ENCODE measurements at regions of chr1 and their contacts with region 1.

Region 1: DNA sequence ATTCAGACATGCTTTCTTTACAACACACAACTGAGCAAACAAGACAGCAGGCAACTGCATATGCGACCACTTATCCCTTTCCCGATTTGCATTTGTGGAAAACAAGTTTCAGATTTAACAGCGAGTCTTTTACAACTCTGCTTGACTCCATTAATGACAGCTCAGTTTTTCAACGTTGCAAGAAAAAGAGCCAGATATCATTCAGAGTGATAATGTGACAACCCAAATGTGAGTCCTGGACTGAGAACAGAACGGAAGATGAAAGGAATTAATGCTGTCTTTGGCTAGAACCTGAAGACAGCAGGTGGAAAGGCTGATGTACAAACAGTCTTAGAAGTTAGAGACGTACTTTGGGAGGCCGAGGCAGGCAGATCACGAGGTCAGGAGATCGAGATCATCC is 83.0 kb upstream of the C8B start:
- DNase-seq: no peak
- ATAC-seq: no peak
- H3K4me3 ChIP-seq: no peak overlapping the region
- H3K27ac ChIP-seq: no peak overlapping the region
- H3K4me1 ChIP-seq: no peaks in the 10 kb centered on the region
- H3K27me3 ChIP-seq: no peaks in the 10 kb centered on the region
- CTCF ChIP-seq: no peak

Region 2: DNA sequence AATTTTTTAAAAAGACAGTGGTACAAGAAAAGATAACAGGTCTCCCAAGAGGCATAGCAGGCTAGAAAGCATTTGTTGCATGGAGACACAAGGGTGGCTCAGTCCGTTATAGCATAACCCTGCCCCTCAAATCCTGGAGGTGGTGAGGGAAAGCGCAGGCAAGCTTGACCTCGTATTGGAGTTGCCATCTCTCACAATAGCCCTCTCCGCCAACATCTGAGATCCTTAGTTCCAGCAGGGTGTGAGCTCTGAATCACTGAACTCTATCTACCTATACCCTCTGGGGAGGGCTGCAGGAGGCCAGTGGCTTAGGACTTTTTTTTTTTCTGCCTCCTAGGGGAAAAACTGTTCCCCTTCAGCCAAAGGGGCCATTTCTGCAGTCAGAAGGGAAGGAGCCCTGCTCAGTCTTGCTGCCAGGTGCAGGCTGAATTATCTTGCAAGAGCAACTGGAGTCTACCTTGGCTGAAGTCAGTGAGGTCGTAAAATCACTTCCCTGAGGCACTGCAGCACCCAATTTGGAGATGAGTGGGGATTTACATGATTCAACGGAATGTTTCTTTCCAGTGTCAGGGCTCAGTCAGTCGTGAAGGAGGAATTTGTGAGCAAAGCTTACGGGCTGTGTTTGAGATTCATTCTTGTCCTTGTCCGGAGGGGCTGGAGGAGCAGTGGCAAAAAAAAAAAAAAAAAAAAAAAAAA is 211.5 kb before region 1 on chr1:
- intact Hi-C with region 1: loop called in 1 of 10 experiments (anchors 5 kb)
- DNase-seq: no peak
- ATAC-seq: no peak
- H3K4me3 ChIP-seq: no peak overlapping the region
- H3K27ac ChIP-seq: no peak overlapping the region
- H3K4me1 ChIP-seq: peaks cover 0 to under 1% (median 0%) of the 10 kb centered on the region in 9 donors
- H3K27me3 ChIP-seq: peaks cover 0 to 4% (median 0%) of the 10 kb centered on the region in 7 donors
- CTCF ChIP-seq: no peak

Region 3: GRCh38 chr1:57131701-57132394 is 83.0 kb after region 1 on chr1:
- intact Hi-C with region 1: no loop called
- DNase-seq: no peak
- ATAC-seq: peak; percentile 61 to 94 (median 86)
- H3K4me3 ChIP-seq: no peak overlapping the region
- H3K27ac ChIP-seq: peak overlapping the region in 6 of 10 donors; percentile 11 to 68 (median 58)
- H3K4me1 ChIP-seq: peaks cover 0 to 25% (median 3%) of the 10 kb centered on the region in 9 donors
- H3K27me3 ChIP-seq: no peaks in the 10 kb centered on the region
- CTCF ChIP-seq: no peak

Measured in heart right ventricle (tissue), 16 donors.